ENCODE measurements at regions of chr18 and their contacts with region 1.

Region 1: GRCh38 chr18:63422087-63422809 is at the start of gene VPS4B:
- DNase-seq: peak; percentile 100
- H3K4me3 Mint-ChIP-seq: peak within 1 kb of the TSS; percentile 89
- H3K27ac Mint-ChIP-seq: peak within 1 kb of the TSS; percentile 92
- H3K4me1 Mint-ChIP-seq: peaks cover 26% of the 10 kb centered on the region
- H3K27me3 Mint-ChIP-seq: peaks cover 2% of the 10 kb centered on the region
- total RNA-seq, gene VPS4B: 53.8 and 56.1 TPM in 2 replicates

Region 2: GRCh38 chr18:63105636-63106316 is 316.5 kb before region 1 on chr18:
- intact Hi-C with region 1: no loop called
- DNase-seq: no peak
- H3K4me3 Mint-ChIP-seq: no peak overlapping the region
- H3K27ac Mint-ChIP-seq: no peak overlapping the region
- H3K4me1 Mint-ChIP-seq: peaks cover 61% of the 10 kb centered on the region
- H3K27me3 Mint-ChIP-seq: peaks cover 5% of the 10 kb centered on the region

Region 3: GRCh38 chr18:63367053-63367953 is 54.9 kb before region 1 on chr18 and contains the start of gene KDSR:
- intact Hi-C with region 1: loop called (anchors 1 kb)
- DNase-seq: peak; percentile 82
- H3K4me3 Mint-ChIP-seq: peak within 1 kb of the TSS; percentile 94
- H3K27ac Mint-ChIP-seq: peak within 1 kb of the TSS; percentile 84
- H3K4me1 Mint-ChIP-seq: peaks cover 28% of the 10 kb centered on the region
- H3K27me3 Mint-ChIP-seq: no peaks in the 10 kb centered on the region
- total RNA-seq, gene KDSR: 73.3 and 76.1 TPM in 2 replicates

Region 4: GRCh38 chr18:63378919-63379638 is 43.2 kb before region 1 on chr18:
- intact Hi-C with region 1: loop called (anchors 1 kb)
- DNase-seq: no peak
- H3K4me3 Mint-ChIP-seq: peak overlapping the region; percentile 18
- H3K27ac Mint-ChIP-seq: peak overlapping the region; percentile 69
- H3K4me1 Mint-ChIP-seq: peaks cover 23% of the 10 kb centered on the region
- H3K27me3 Mint-ChIP-seq: no peaks in the 10 kb centered on the region

Region 5: GRCh38 chr18:63730773-63731172 is 308.5 kb after region 1 on chr18:
- intact Hi-C with region 1: no loop called
- DNase-seq: no peak
- H3K4me3 Mint-ChIP-seq: no peak overlapping the region
- H3K27ac Mint-ChIP-seq: no peak overlapping the region
- H3K4me1 Mint-ChIP-seq: no peaks in the 10 kb centered on the region
- H3K27me3 Mint-ChIP-seq: no peaks in the 10 kb centered on the region